CD4-positive, alpha-beta memory T cell (primary cell): ENCODE measurements at regions of chr19 and their contacts with region 1.

Region 1: GRCh38 chr19:46049597-46049996 is 8.8 kb upstream of the IGFL4 start:
- DNase-seq: no peak
- H3K4me3 ChIP-seq: no peak overlapping the region
- H3K4me3 Mint-ChIP-seq: no peak overlapping the region
- H3K27ac ChIP-seq: no peak overlapping the region
- H3K27ac Mint-ChIP-seq: no peak overlapping the region
- H3K4me1 ChIP-seq: no peaks in the 10 kb centered on the region
- H3K4me1 Mint-ChIP-seq: no peaks in the 10 kb centered on the region
- H3K27me3 ChIP-seq: peaks cover 6% of the 10 kb centered on the region
- H3K27me3 Mint-ChIP-seq: peaks cover 48 to 53% of the 10 kb centered on the region in 2 donors

Region 2: DNA sequence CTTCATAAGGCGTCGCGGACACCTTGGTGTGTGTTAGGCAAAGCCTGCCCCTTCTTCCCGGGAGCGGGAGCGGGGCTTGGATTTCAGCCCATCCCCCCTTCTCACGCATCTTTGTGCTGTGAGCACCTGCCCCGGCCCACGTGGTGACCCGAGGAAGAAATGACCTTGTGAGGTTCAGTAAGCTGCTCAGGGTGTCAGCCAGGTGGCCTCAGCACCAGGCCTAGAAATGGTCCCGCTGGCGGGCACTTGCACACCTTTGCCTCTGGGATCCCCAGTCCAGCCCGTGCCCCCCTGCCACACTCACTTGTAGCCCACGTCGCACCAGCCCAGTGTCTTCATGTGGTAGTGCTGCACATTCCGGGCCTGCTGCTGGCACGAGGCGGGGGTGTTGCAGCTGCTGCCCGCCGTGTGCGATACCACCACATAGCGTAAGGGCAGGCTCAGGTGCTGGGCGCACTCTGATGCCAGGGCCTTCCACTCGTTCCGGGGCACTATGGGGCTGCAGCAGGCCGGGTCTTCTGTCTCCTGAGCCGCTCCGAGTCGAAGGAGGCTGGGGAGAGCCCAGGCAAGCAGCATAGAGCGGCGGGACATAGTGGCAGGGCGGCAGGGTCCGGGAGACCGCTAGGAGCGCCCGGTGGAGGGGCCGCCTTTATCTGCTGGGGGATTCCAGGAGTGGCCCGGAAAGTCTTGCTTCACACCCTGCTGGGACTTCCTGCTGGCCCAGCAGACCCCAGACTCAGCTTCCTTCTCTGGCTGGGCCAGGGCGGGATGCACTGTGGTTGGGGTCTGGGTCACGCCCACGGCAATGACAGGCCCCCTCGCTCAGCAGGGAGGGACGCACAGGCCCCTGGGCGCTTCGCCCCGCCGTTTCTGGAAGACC is 26.9 kb before region 1 on chr19 and contains the start of gene PGLYRP1:
- CTCF ChIA-PET with region 1: interaction called, 10 read pairs
- POLR2A ChIA-PET with region 1: no interaction called
- intact Hi-C with region 1: no loop called
- DNase-seq: no peak
- H3K4me3 ChIP-seq: no peak within 1 kb of the TSS
- H3K4me3 Mint-ChIP-seq: no peak within 1 kb of the TSS
- H3K27ac ChIP-seq: no peak within 1 kb of the TSS
- H3K27ac Mint-ChIP-seq: peak within 1 kb of the TSS in 1 of 7 donors; percentile 25
- H3K4me1 ChIP-seq: peaks cover 11% of the 10 kb centered on the region
- H3K4me1 Mint-ChIP-seq: peaks cover 10 to 21% (median 14%) of the 10 kb centered on the region in 4 donors
- H3K27me3 ChIP-seq: peaks cover 4% of the 10 kb centered on the region
- H3K27me3 Mint-ChIP-seq: peaks cover 5 to 13% of the 10 kb centered on the region in 2 donors
- total RNA-seq, gene PGLYRP1: not detected